Posterior cingulate gyrus (tissue), 11 donors: ENCODE measurements at regions of chr14 and their contacts with region 1.

Region 1: DNA sequence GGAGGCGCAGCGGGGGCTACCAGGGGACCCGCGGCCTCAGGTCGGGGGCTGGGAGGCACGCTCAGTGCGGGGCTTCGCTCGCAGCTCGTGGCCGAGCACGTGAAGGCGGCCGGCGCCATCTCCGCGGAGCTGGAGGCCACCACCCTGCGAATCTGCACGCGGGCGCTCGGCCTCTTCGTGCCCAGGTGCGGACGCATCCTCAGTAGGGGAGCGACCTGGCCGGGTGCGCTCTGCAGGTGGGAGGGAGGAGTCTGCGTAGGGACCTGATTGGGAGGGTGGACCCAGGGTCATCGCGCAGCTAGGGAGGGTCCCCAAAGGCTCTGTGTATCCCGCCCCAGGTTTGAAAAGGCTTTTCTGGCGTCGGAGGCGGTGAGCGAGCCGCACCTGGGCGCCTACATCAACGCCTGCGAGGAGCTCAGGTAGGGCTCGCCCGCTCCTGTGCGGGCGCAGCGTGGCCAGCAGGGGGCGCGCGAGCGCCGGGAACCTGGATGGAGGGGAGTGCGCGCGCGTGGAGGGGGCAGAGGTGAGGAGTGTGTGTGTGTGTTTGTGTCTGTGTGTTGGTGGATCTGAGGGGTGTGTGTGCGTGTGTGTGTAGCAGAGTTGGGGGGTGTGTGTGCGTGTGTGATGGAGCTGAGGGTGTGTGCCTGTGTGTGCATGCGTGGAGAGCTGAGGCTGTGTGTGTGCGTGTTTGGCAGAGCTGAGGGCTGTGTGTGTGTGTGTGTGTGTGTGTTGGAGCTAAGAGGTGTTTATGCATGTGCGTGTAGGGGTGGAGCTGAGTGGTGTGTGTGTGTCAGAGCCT is 10.3 kb downstream of the EXOC3L4 start:
- DNase-seq: peak in 9 of 10 donors; percentile 49 to 94 (median 69)

Region 2: GRCh38 chr14:103185051-103185992 is 80.5 kb after region 1 on chr14:
- intact Hi-C with region 1: loop called (anchors 2 kb)
- DNase-seq: no peak

Region 3: GRCh38 chr14:103292426-103293374 is 187.8 kb after region 1 on chr14:
- intact Hi-C with region 1: loop called (anchors 1 kb)
- DNase-seq: peak; percentile 62 to 96 (median 87)